Dendritic cell treated with granulocyte-macrophage colony-stimulating factor and Interleukin-4, amounts not matched to agents 40 ng/mL and 50 ng/mL, for 4 days (primary cell): ENCODE measurements at regions of chr1 and their contacts with region 1.

Region 1: GRCh38 chr1:15417365-15417934 is 7.8 kb downstream of the EFHD2 start:
- H3K4me3 Mint-ChIP-seq: peak overlapping the region; percentile 75
- H3K27ac Mint-ChIP-seq: peak overlapping the region; percentile 97
- H3K4me1 Mint-ChIP-seq: peaks cover 90% of the 10 kb centered on the region
- H3K27me3 Mint-ChIP-seq: no peaks in the 10 kb centered on the region

Region 2: GRCh38 chr1:15328351-15329103 is 88.9 kb before region 1 on chr1:
- intact Hi-C with region 1: loop called (anchors 2 kb)
- H3K4me3 Mint-ChIP-seq: peak overlapping the region; percentile 4
- H3K27ac Mint-ChIP-seq: peak overlapping the region; percentile 92
- H3K4me1 Mint-ChIP-seq: peaks cover 88% of the 10 kb centered on the region
- H3K27me3 Mint-ChIP-seq: peaks cover 11% of the 10 kb centered on the region

Region 3: DNA sequence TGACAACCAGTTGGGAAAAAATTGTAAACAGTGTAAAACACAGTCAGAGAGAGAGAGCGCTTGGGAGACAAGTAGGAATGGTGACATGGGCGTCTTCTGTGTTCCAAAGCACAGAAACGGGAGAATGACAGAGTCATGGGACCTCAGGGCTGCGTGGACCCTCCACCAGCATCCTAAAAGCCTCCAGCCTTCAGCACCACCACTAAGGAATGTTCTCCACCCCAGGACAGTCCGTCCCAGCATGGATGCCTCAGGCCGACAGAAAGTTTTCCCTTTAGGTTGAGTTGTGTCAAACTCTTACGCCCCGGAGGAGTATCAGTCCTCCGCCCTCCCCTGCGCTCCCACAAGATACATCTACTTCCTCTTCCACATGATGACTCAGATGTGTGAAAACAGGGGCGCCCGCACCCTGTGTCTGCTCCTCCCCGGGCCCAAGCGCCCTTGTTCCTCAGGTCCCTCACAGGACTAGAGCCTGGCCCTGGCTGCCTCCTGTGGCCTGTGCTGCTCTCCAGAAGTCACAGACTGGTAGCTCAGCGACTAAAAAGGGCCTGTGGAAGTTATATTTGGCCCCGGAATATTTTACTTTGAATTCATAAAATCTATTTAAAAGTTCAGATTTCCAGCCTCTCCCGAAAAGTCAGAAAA is 71.6 kb before region 1 on chr1:
- intact Hi-C with region 1: loop called (anchors 5 kb)
- H3K4me3 Mint-ChIP-seq: peak overlapping the region; percentile 39
- H3K27ac Mint-ChIP-seq: peak overlapping the region; percentile 93
- H3K4me1 Mint-ChIP-seq: peaks cover 92% of the 10 kb centered on the region
- H3K27me3 Mint-ChIP-seq: peaks cover 9% of the 10 kb centered on the region

Region 4: GRCh38 chr1:15430787-15431570 is 13.5 kb after region 1 on chr1:
- intact Hi-C with region 1: loop called (anchors 2 kb)
- H3K4me3 Mint-ChIP-seq: no peak overlapping the region
- H3K27ac Mint-ChIP-seq: peak overlapping the region; percentile 74
- H3K4me1 Mint-ChIP-seq: peaks cover 88% of the 10 kb centered on the region
- H3K27me3 Mint-ChIP-seq: no peaks in the 10 kb centered on the region

Region 5: DNA sequence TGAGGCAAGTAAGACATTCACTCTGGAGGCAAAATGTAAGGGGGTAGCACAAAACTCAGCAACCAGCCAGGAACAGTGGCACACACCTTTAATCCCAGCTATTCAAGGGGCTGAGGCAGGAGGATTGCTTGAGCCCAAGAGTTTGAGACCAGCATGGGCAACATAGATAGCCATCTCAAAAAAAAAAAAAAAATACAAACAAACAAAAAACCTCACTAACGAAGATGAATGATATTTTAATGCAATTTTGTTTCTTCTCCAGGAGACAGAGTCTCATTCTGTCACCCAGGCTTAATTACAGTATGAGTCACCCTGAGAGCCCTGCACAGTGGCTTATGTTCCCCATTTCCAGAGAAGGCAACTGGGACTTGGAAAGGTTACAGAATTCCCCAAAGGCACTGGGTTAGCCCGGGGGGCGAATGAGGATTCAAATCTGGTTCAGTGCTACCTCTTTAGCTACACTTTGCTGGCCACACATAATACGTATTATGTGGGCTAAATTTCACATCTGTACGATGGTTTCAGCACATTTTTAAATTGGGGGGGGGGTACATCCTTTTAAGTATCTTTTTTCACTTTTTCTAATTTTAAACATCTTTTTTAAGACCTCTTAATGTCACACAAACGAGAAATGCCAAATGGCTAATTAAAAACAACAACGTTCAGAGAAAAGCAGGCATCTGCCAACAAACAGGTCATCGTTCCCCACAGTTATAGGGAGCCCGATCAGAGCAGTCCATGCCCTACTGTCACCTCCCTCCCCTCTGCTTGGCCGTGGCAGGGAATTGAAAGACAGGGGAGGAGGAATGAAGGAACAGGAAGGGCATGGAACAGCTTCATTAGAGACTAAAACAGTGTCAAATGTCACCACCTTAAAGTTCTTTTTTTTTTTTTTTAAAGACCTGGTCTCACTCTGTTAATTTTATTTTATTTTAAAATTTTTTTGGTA is 42.6 kb after region 1 on chr1:
- intact Hi-C with region 1: no loop called
- H3K4me3 Mint-ChIP-seq: no peak overlapping the region
- H3K27ac Mint-ChIP-seq: peak overlapping the region; percentile 56
- H3K4me1 Mint-ChIP-seq: peaks cover 48% of the 10 kb centered on the region
- H3K27me3 Mint-ChIP-seq: no peaks in the 10 kb centered on the region